ENCODE measurements at regions of chr6 and their contacts with region 1.

Region 1: DNA sequence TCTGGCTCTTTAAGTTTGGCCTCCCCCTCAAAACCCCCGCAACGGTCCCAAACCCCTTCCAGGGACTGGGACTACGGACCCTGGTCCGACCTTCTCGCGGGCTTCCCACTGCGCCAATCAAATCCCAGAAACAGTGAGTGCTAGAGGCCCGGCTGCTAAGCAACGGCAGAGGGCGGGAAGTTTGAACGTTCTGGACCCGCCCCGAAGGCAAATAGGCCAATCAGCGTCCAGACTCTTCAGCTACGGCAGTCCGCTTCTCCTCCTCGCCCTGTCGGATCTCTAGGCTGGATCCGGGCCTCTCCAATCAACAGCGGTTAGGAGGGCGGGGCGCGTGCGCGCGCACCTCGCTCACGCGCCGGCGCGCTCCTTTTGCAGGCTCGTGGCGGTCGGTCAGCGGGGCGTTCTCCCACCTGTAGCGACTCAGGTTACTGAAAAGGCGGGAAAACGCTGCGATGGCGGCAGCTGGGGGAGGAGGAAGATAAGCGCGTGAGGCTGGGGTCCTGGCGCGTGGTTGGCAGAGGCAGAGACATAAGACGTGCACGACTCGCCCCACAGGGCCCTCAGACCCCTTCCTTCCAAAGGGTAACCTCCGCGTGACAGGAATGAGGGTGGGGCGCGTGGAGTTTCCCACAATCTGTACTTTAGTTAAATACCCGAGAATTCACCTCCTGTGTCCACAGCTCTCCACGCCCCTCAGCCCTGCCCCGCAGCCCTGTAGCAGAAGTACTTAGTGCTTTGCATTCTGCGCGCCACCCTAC is at the start of gene MSH5:
- DNase-seq: peak; percentile 97 to 99
- ATAC-seq: peak; percentile 99 to 100 (median 100)
- H3K4me3 ChIP-seq: peak within 1 kb of the TSS; percentile 74
- H3K27ac ChIP-seq: no peak within 1 kb of the TSS
- H3K4me1 ChIP-seq: peaks cover 15% of the 10 kb centered on the region
- H3K27me3 ChIP-seq: peaks cover 0 to 2% (median 0%) of the 10 kb centered on the region in 3 donors
- CTCF ChIP-seq: no peak
- total RNA-seq, gene MSH5: 1.7 to 3.0 (median 1.8) TPM

Region 2: GRCh38 chr6:31474871-31475286 is 264.9 kb before region 1 on chr6:
- intact Hi-C with region 1: no loop called
- DNase-seq: no peak
- ATAC-seq: no peak
- H3K4me3 ChIP-seq: no peak overlapping the region
- H3K27ac ChIP-seq: no peak overlapping the region
- H3K4me1 ChIP-seq: no peaks in the 10 kb centered on the region
- H3K27me3 ChIP-seq: peaks cover 0 to 2% (median 0%) of the 10 kb centered on the region in 3 donors
- CTCF ChIP-seq: peak; percentile 12

Region 3: GRCh38 chr6:31665501-31666336 is 74.1 kb before region 1 on chr6 and contains the start of gene CSNK2B:
- intact Hi-C with region 1: loop called in 1 of 2 experiments (anchors 5 kb)
- DNase-seq: peak; percentile 99
- ATAC-seq: peak; percentile 89 to 92 (median 91)
- H3K4me3 ChIP-seq: peak within 1 kb of the TSS; percentile 91
- H3K27ac ChIP-seq: peak within 1 kb of the TSS; percentile 97
- H3K4me1 ChIP-seq: peaks cover 41% of the 10 kb centered on the region
- H3K27me3 ChIP-seq: no peaks in the 10 kb centered on the region
- CTCF ChIP-seq: no peak
- total RNA-seq, gene CSNK2B: 102 to 129 (median 103) TPM

Region 4: GRCh38 chr6:31815025-31815838 is 75.4 kb after region 1 on chr6 and contains the starts of genes HSPA1A and HSPA1L:
- intact Hi-C with region 1: no loop called
- DNase-seq: peak; percentile 94 to 98
- ATAC-seq: peak; percentile 77 to 85 (median 80)
- H3K4me3 ChIP-seq: peak within 1 kb of the TSS; percentile 76
- H3K27ac ChIP-seq: peak within 1 kb of the TSS; percentile 88
- H3K4me1 ChIP-seq: peaks cover 26% of the 10 kb centered on the region
- H3K27me3 ChIP-seq: no peaks in the 10 kb centered on the region
- CTCF ChIP-seq: no peak
- total RNA-seq, gene HSPA1A: 241 to 940 (median 407) TPM
- total RNA-seq, gene HSPA1L: 2.5 to 6.2 (median 4.4) TPM